ENCODE measurements at regions of chr2 and their contacts with region 1.

Region 1: DNA sequence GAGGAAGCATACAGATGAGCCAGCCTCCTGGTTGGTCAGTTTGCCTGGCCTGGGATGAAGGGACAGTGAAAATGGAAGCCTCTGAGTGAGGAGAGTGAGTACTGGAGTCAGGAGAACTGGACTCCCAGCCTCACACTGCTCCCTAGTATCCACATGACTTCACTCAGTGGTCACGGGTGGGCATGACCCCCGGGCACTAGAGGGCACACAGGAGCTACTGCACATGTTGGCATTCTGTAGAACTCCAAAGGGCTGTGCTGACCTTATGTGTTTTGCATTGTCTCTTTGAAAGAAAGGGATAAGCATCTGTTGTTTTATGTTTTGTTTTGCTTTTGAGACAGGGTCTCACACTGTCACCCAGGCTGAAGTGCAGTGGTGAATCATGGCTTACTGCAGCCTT is 23.7 kb downstream of the NCAPH start:
- DNase-seq: no peak
- H3K4me3 ChIP-seq: no peak overlapping the region
- H3K27ac ChIP-seq: no peak overlapping the region
- H3K4me1 ChIP-seq: no peaks in the 10 kb centered on the region
- H3K27me3 ChIP-seq: no peaks in the 10 kb centered on the region
- CTCF ChIP-seq: no peak
- POLR2A ChIP-seq: no peak

Region 2: GRCh38 chr2:96396095-96396494 is 36.8 kb after region 1 on chr2:
- intact Hi-C with region 1: loop called (anchors 1 kb)
- DNase-seq: no peak
- H3K4me3 ChIP-seq: no peak overlapping the region
- H3K27ac ChIP-seq: no peak overlapping the region
- H3K4me1 ChIP-seq: no peaks in the 10 kb centered on the region
- H3K27me3 ChIP-seq: no peaks in the 10 kb centered on the region
- CTCF ChIP-seq: no peak
- POLR2A ChIP-seq: no peak

Region 3: GRCh38 chr2:96449174-96449573 is 89.9 kb after region 1 on chr2:
- intact Hi-C with region 1: no loop called
- DNase-seq: no peak
- H3K4me3 ChIP-seq: no peak overlapping the region
- H3K27ac ChIP-seq: no peak overlapping the region
- H3K4me1 ChIP-seq: no peaks in the 10 kb centered on the region
- H3K27me3 ChIP-seq: no peaks in the 10 kb centered on the region
- CTCF ChIP-seq: no peak
- POLR2A ChIP-seq: no peak